Natural killer cell (primary cell): ENCODE measurements at regions of chr15 and their contacts with region 1.

Region 1: GRCh38 chr15:52735231-52736089 is 54.7 kb downstream of the ONECUT1 start:
- DNase-seq: peak; percentile 24 to 89
- ATAC-seq: peak; percentile 83 to 85 (median 84)
- H3K4me3 ChIP-seq: no peak overlapping the region
- H3K4me3 Mint-ChIP-seq: no peak overlapping the region
- H3K27ac ChIP-seq: no peak overlapping the region
- H3K27ac Mint-ChIP-seq: no peak overlapping the region
- H3K4me1 ChIP-seq: no peaks in the 10 kb centered on the region
- H3K4me1 Mint-ChIP-seq: peaks cover under 1% of the 10 kb centered on the region in 2 donors
- H3K27me3 ChIP-seq: no peaks in the 10 kb centered on the region
- H3K27me3 Mint-ChIP-seq: peaks cover 0 to 12% of the 10 kb centered on the region in 2 donors
- CTCF ChIP-seq: peak; percentile 97

Region 2: GRCh38 chr15:52256366-52256765 is 479.1 kb before region 1 on chr15:
- intact Hi-C with region 1: loop called (anchors 1 kb)
- DNase-seq: peak; percentile 45 to 90
- ATAC-seq: peak; percentile 86 to 95 (median 93)
- H3K4me3 ChIP-seq: no peak overlapping the region
- H3K4me3 Mint-ChIP-seq: peak overlapping the region; percentile 47
- H3K27ac ChIP-seq: no peak overlapping the region
- H3K27ac Mint-ChIP-seq: peak overlapping the region in 1 of 2 donors; percentile 27
- H3K4me1 ChIP-seq: peaks cover 10% of the 10 kb centered on the region
- H3K4me1 Mint-ChIP-seq: peaks cover 8 to 12% of the 10 kb centered on the region in 2 donors
- H3K27me3 ChIP-seq: no peaks in the 10 kb centered on the region
- H3K27me3 Mint-ChIP-seq: peaks cover 0 to 2% of the 10 kb centered on the region in 2 donors
- CTCF ChIP-seq: peak; percentile 71

Region 3: GRCh38 chr15:52331490-52332240 is 403.8 kb before region 1 on chr15:
- intact Hi-C with region 1: loop called (anchors 1 kb)
- DNase-seq: peak in 1 of 2 donors; percentile 83
- ATAC-seq: peak; percentile 73 to 98 (median 92)
- H3K4me3 ChIP-seq: no peak overlapping the region
- H3K4me3 Mint-ChIP-seq: peak overlapping the region; percentile 40
- H3K27ac ChIP-seq: peak overlapping the region; percentile 24
- H3K27ac Mint-ChIP-seq: peak overlapping the region; percentile 68 to 74
- H3K4me1 ChIP-seq: peaks cover 6% of the 10 kb centered on the region
- H3K4me1 Mint-ChIP-seq: peaks cover 10 to 13% of the 10 kb centered on the region in 2 donors
- H3K27me3 ChIP-seq: no peaks in the 10 kb centered on the region
- H3K27me3 Mint-ChIP-seq: no peaks in the 10 kb centered on the region
- CTCF ChIP-seq: peak; percentile 49

Region 4: DNA sequence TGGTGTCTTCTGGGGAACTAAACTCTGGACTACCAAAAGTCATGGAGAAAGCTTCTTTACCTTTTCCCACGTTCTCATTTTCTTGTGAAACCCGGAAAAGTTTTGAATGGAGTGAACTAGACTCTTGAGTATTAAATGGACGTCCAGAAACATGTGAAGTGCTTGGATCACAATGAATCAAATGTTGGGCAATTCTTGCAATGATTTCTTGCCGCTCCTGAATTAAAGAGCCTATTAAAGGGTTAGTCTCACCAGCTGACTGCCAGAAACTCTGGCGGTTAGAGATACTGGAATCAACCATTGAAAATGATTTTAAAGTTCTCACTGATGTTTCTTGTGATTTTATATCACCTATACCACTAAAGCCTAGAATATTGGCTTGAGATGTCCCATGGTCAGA is 125.9 kb before region 1 on chr15:
- intact Hi-C with region 1: loop called (anchors 10 kb)
- DNase-seq: no peak
- ATAC-seq: no peak
- H3K4me3 ChIP-seq: no peak overlapping the region
- H3K4me3 Mint-ChIP-seq: no peak overlapping the region
- H3K27ac ChIP-seq: no peak overlapping the region
- H3K27ac Mint-ChIP-seq: no peak overlapping the region
- H3K4me1 ChIP-seq: no peaks in the 10 kb centered on the region
- H3K4me1 Mint-ChIP-seq: no peaks in the 10 kb centered on the region
- H3K27me3 ChIP-seq: no peaks in the 10 kb centered on the region
- H3K27me3 Mint-ChIP-seq: no peaks in the 10 kb centered on the region
- CTCF ChIP-seq: no peak

Region 5: GRCh38 chr15:52857471-52857870 is 122.0 kb after region 1 on chr15:
- intact Hi-C with region 1: no loop called
- DNase-seq: no peak
- ATAC-seq: no peak
- H3K4me3 ChIP-seq: no peak overlapping the region
- H3K4me3 Mint-ChIP-seq: no peak overlapping the region
- H3K27ac ChIP-seq: no peak overlapping the region
- H3K27ac Mint-ChIP-seq: no peak overlapping the region
- H3K4me1 ChIP-seq: no peaks in the 10 kb centered on the region
- H3K4me1 Mint-ChIP-seq: no peaks in the 10 kb centered on the region
- H3K27me3 ChIP-seq: no peaks in the 10 kb centered on the region
- H3K27me3 Mint-ChIP-seq: peaks cover 5 to 14% of the 10 kb centered on the region in 2 donors
- CTCF ChIP-seq: no peak